Lower lobe of right lung (tissue), 2 donors: ENCODE measurements at regions of chr20 and their contacts with region 1.

Region 1: DNA sequence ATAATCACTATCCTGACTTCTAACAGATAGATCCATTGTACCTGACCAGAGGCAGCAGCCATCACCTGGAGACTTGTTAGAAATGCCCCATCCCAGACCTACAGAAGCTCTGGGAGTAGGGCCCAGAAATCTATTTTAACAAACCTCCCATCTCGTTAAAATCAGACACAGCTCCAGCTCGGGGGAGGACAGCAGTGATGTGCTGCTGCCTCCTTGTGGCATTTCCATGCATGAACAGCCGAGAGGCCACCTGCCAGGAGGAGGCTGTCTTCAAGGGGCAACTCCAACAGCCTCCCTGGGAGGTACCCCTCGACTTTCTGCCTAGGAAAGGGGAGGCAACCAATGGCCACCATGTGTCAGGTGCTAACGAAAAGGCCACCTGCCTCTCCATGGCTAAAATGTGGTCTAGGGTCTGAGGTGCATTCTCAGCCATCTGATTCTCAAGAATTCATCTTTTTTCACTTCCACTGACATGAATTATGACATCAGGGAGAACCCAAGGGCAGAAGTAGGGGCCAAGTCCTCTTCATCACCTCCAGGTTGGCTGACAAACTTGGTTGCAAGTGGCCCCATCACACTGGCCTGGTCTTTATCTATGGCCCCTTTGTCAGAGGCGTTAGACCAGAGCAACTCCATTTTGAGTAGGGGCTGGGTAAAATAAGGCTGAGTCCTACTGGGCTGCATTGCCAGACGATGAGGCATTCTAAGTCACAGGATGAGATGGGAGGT is 12.2 kb upstream of the KCNK15 start:
- DNase-seq: peak; percentile 68
- ATAC-seq: peak; percentile 58 to 72
- H3K4me3 ChIP-seq: no peak overlapping the region
- H3K27ac ChIP-seq: no peak overlapping the region
- H3K4me1 ChIP-seq: peaks cover 7% of the 10 kb centered on the region
- H3K27me3 ChIP-seq: no peaks in the 10 kb centered on the region
- CTCF ChIP-seq: peak; percentile 94

Region 2: GRCh38 chr20:44666066-44666465 is 67.4 kb before region 1 on chr20:
- intact Hi-C with region 1: no loop called
- DNase-seq: no peak
- ATAC-seq: no peak
- H3K4me3 ChIP-seq: no peak overlapping the region
- H3K27ac ChIP-seq: no peak overlapping the region
- H3K4me1 ChIP-seq: no peaks in the 10 kb centered on the region
- H3K27me3 ChIP-seq: no peaks in the 10 kb centered on the region
- CTCF ChIP-seq: no peak

Region 3: GRCh38 chr20:44688053-44688625 is 45.4 kb before region 1 on chr20:
- intact Hi-C with region 1: loop called (anchors 5 kb)
- DNase-seq: no peak
- ATAC-seq: no peak
- H3K4me3 ChIP-seq: no peak overlapping the region
- H3K27ac ChIP-seq: no peak overlapping the region
- H3K4me1 ChIP-seq: peaks cover 27% of the 10 kb centered on the region
- H3K27me3 ChIP-seq: no peaks in the 10 kb centered on the region
- CTCF ChIP-seq: no peak